ENCODE measurements at regions of chr19 and their contacts with region 1.

Region 1: DNA sequence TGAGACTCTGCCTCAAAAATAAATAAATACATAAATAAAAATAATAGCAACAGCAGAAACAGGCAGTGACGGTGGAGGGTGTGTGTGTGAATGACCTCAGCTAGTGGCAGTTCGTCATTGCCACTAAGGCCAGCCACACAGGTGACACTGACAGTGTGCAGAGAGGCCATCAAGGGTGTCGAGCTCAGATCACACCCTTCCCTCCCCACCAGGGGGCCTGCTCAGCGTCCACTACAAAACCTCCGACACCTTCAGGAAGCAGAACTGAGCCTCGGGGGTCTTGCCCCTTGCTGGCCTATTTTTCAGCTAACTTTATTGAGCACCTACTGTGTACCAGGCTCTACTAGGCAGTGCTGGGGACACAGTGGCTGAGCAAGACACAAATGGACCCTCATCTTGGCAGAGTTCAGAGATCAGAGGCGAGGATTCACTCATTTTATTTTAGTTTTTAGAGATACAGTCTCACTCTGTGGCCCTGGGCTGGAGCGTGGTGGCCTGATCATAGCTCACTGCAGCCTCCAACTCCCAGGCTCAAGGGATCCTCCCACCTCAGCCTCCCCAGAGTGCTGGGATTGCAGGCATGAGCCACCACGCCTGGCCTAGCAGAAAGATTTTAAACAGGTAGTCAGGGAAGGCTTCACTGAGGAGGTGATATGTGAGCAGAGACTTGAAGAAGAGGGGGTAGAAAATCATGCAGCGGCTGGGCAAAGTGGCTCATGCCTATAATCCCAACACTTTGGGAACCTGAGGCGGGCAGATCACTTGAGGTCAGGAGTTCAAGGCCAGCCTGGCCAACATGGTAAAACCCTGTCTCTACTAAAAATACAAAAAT is 30.3 kb upstream of the SEMA6B start:
- DNase-seq: peak in 1 of 2 experiments; percentile 57
- H3K4me3 ChIP-seq: no peak overlapping the region
- H3K27ac ChIP-seq: no peak overlapping the region
- H3K4me1 ChIP-seq: no peaks in the 10 kb centered on the region; a peak in 1 of 7 replicates
- H3K27me3 ChIP-seq: peaks cover 0 to 6% (median 4%) of the 10 kb centered on the region in 4 experiments; a peak in 3 of 7 replicates
- CTCF ChIP-seq: peak; percentile 27 to 33 (median 31)
- EP300 ChIP-seq: no peak
- POLR2A ChIP-seq: no peak
- RAD21 ChIP-seq: peak; percentile 21 to 29; a peak in 2 of 4 replicates

Region 2: GRCh38 chr19:4471403-4472173 is 118.2 kb before region 1 on chr19:
- CTCF ChIA-PET with region 1: no interaction called
- POLR2A ChIA-PET with region 1: no interaction called
- DNase-seq: peak; percentile 92 to 99
- H3K4me3 ChIP-seq: peak overlapping the region; percentile 37 to 99 (median 60)
- H3K27ac ChIP-seq: peak overlapping the region; percentile 35; the same call in 1 of the 2 replicates
- H3K4me1 ChIP-seq: peaks cover 0 to 16% (median 11%) of the 10 kb centered on the region in 4 experiments; a peak in 5 of 7 replicates
- H3K27me3 ChIP-seq: no peaks in the 10 kb centered on the region; a peak in 1 of 7 replicates
- CTCF ChIP-seq: no peak
- EP300 ChIP-seq: no peak
- POLR2A ChIP-seq: no peak; a peak in 1 of 3 replicates
- RAD21 ChIP-seq: no peak

Region 3: DNA sequence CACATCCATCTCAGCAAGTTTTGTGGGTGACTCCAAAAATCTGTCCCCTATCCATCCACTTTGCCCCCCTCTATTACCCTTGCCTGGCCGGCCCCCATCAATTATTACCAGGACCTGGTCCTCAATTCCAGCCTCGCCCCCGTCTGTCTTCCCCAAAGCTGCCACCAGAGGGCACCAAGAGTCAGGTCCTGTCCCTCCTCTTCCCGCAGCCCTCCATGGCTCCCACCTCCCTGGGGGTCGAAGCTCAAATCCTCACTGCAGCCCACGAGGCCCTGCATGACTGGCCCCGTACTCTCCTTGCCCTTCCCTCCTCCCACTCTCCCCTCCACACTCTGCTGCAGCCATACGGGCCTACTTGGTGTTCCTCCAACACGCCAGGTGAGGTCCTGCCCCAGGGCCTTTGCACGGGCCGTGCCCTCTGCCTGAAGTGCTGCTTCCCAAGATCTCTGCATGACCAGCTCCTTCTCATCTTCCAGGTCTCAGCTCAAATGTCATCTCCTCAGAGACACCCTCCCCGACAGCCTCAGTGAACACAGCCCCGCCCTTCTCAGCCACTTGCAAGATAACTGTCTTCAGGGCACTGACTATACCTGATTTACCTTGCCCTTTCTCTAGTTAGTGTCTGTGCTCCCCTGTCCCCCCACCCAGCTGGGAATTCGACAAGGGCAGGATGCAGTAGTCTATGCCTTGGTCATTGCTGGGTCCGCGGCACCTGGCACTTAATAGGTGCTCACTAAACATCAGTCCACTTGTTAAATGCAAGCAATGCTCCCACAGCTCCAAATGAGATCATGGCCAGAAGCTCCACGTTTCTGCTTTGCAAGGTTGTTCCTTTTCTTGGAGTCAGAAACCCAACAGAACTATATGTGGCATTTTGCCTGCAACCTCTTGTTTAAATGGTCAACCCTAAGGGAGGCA is 13.5 kb before region 1 on chr19:
- CTCF ChIA-PET with region 1: interaction called, 31 read pairs
- POLR2A ChIA-PET with region 1: interaction called, 19 read pairs
- DNase-seq: peak in 1 of 2 experiments; percentile 96
- H3K4me3 ChIP-seq: 0 out of 8 replicates have a peak overlapping the region, but pooled peaks of 1 of the 4 experiments have one; percentile 36
- H3K27ac ChIP-seq: no peak overlapping the region
- H3K4me1 ChIP-seq: peaks cover 3 to 9% (median 7%) of the 10 kb centered on the region in 4 experiments
- H3K27me3 ChIP-seq: no peaks in the 10 kb centered on the region
- CTCF ChIP-seq: peak; percentile 79 to 94 (median 88)
- EP300 ChIP-seq: no peak
- POLR2A ChIP-seq: no peak
- RAD21 ChIP-seq: peak; percentile 55 to 66

Measured in H1 (cell line).